Pancreas (tissue), 10 donors: ENCODE measurements at regions of chr12 and their contacts with region 1.

Region 1: GRCh38 chr12:54191550-54192022 is 2.8 kb upstream of the SMUG1 start:
- DNase-seq: peak; percentile 71 to 89 (median 80)
- ATAC-seq: peak; percentile 60 to 82 (median 80)
- H3K4me3 ChIP-seq: no peak overlapping the region
- H3K27ac ChIP-seq: no peak overlapping the region
- H3K4me1 ChIP-seq: peaks cover 0 to 3% (median 0%) of the 10 kb centered on the region in 3 donors
- H3K27me3 ChIP-seq: no peaks in the 10 kb centered on the region
- CTCF ChIP-seq: peak; percentile 71 to 83 (median 80)

Region 2: GRCh38 chr12:54032627-54033100 is 158.9 kb before region 1 on chr12 and contains the start of gene HOXC5:
- intact Hi-C with region 1: loop called in 1 of 3 experiments (anchors 5 kb)
- DNase-seq: peak in 5 of 6 donors; percentile 42 to 77 (median 55)
- ATAC-seq: peak in 3 of 4 donors; percentile 69 to 89 (median 77)
- H3K4me3 ChIP-seq: peak within 1 kb of the TSS in 1 of 4 donors; percentile 16
- H3K27ac ChIP-seq: no peak within 1 kb of the TSS
- H3K4me1 ChIP-seq: no peaks in the 10 kb centered on the region
- H3K27me3 ChIP-seq: peaks cover 3 to 58% (median 12%) of the 10 kb centered on the region in 4 donors
- CTCF ChIP-seq: peak; percentile 52 to 79 (median 73)
- total RNA-seq, gene HOXC5: not detected

Region 3: GRCh38 chr12:54082397-54082892 is 109.1 kb before region 1 on chr12:
- intact Hi-C with region 1: no loop called
- DNase-seq: peak in 3 of 6 donors; percentile 19 to 60 (median 26)
- ATAC-seq: no peak
- H3K4me3 ChIP-seq: no peak overlapping the region
- H3K27ac ChIP-seq: no peak overlapping the region
- H3K4me1 ChIP-seq: peaks cover 0 to under 1% (median 0%) of the 10 kb centered on the region in 3 donors
- H3K27me3 ChIP-seq: no peaks in the 10 kb centered on the region
- CTCF ChIP-seq: no peak